ENCODE measurements at regions of chr4 and their contacts with region 1.

Region 1: DNA sequence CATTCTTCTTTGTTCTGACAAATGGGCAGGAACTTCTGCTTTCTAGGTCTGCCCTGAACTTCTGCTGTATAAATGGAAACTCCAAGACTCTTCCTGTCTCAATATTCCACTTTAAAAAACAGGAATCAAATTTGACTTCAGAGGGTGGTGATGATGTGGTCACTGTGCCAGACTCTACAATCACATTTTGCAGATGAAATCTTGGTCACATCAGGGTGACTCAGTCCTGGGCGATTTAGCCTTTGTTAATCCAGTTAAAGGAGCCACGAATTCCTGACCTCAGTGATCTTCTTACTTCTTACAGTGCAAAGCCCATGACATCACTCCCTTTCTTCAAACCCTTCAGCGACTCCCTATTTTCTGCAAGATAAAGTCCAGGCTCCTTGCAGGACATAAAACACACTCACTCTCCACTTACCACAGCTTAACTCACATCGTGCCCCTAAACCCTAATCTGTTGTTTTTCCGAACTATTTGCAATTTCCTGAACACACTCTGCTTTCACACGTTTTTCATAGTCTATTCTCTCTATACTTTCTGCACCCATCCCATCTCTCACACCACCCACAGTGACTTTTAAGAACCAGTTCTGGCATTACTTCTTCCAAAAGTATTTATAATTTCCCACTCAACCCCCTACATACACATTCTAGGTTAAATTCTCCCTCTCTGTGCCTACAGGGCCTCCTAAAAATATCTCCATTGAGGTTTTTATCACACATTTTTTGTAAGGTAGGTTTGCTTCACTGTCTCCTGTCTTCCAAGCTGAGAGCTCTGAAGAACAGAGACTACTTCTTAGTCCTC is 11.1 kb downstream of the GASK1B start:
- DNase-seq: peak; percentile 99
- H3K4me3 ChIP-seq: peak overlapping the region in 1 of 3 experiments; percentile 16
- H3K27ac ChIP-seq: peak overlapping the region; percentile 77
- H3K4me1 ChIP-seq: peaks cover 94% of the 10 kb centered on the region
- H3K27me3 ChIP-seq: no peaks in the 10 kb centered on the region
- CTCF ChIP-seq: no peak
- POLR2A ChIP-seq: peak; percentile 49

Region 2: GRCh38 chr4:158006990-158007389 is 154.8 kb before region 1 on chr4:
- CTCF ChIA-PET with region 1: no interaction called
- POLR2A ChIA-PET with region 1: no interaction called
- dilution Hi-C with region 1: loop called (anchors 25 kb)
- intact Hi-C with region 1: loop called (anchors 1 kb)
- DNase-seq: peak; percentile 100
- H3K4me3 ChIP-seq: no peak overlapping the region
- H3K27ac ChIP-seq: peak overlapping the region; percentile 75
- H3K4me1 ChIP-seq: peaks cover 36% of the 10 kb centered on the region
- H3K27me3 ChIP-seq: no peaks in the 10 kb centered on the region
- CTCF ChIP-seq: no peak
- POLR2A ChIP-seq: no peak

Region 3: GRCh38 chr4:158020176-158020575 is 141.6 kb before region 1 on chr4:
- CTCF ChIA-PET with region 1: interaction called, 3 read pairs
- POLR2A ChIA-PET with region 1: no interaction called
- dilution Hi-C with region 1: loop called (anchors 25 kb)
- intact Hi-C with region 1: loop called (anchors 1 kb)
- DNase-seq: peak; percentile 96
- H3K4me3 ChIP-seq: peak overlapping the region in 1 of 3 experiments; percentile 30
- H3K27ac ChIP-seq: peak overlapping the region; percentile 95
- H3K4me1 ChIP-seq: peaks cover 59% of the 10 kb centered on the region
- H3K27me3 ChIP-seq: no peaks in the 10 kb centered on the region
- CTCF ChIP-seq: no peak
- POLR2A ChIP-seq: no peak

Region 4: GRCh38 chr4:158033416-158034120 is 128.2 kb before region 1 on chr4:
- CTCF ChIA-PET with region 1: interaction called, 3 read pairs
- POLR2A ChIA-PET with region 1: no interaction called
- dilution Hi-C with region 1: no loop called
- intact Hi-C with region 1: loop called (anchors 1 kb)
- DNase-seq: peak; percentile 96
- H3K4me3 ChIP-seq: peak overlapping the region in 1 of 3 experiments; percentile 11
- H3K27ac ChIP-seq: peak overlapping the region; percentile 85
- H3K4me1 ChIP-seq: peaks cover 29% of the 10 kb centered on the region
- H3K27me3 ChIP-seq: no peaks in the 10 kb centered on the region
- CTCF ChIP-seq: no peak
- POLR2A ChIP-seq: no peak

Region 5: GRCh38 chr4:158129694-158130093 is 32.1 kb before region 1 on chr4:
- CTCF ChIA-PET with region 1: no interaction called
- POLR2A ChIA-PET with region 1: no interaction called
- dilution Hi-C with region 1: no loop called
- intact Hi-C with region 1: no loop called
- DNase-seq: no peak
- H3K4me3 ChIP-seq: no peak overlapping the region
- H3K27ac ChIP-seq: no peak overlapping the region
- H3K4me1 ChIP-seq: no peaks in the 10 kb centered on the region
- H3K27me3 ChIP-seq: no peaks in the 10 kb centered on the region
- CTCF ChIP-seq: no peak
- POLR2A ChIP-seq: no peak

Region 6: GRCh38 chr4:158146736-158147135 is 15.0 kb before region 1 on chr4:
- CTCF ChIA-PET with region 1: no interaction called
- POLR2A ChIA-PET with region 1: no interaction called
- dilution Hi-C with region 1: no loop called
- intact Hi-C with region 1: loop called (anchors 1 kb)
- DNase-seq: no peak
- H3K4me3 ChIP-seq: no peak overlapping the region
- H3K27ac ChIP-seq: no peak overlapping the region
- H3K4me1 ChIP-seq: no peaks in the 10 kb centered on the region
- H3K27me3 ChIP-seq: no peaks in the 10 kb centered on the region
- CTCF ChIP-seq: no peak
- POLR2A ChIP-seq: no peak

Measured in endothelial cell of umbilical vein (primary cell).